ENCODE measurements at regions of chr10 and their contacts with region 1.

Region 1: DNA sequence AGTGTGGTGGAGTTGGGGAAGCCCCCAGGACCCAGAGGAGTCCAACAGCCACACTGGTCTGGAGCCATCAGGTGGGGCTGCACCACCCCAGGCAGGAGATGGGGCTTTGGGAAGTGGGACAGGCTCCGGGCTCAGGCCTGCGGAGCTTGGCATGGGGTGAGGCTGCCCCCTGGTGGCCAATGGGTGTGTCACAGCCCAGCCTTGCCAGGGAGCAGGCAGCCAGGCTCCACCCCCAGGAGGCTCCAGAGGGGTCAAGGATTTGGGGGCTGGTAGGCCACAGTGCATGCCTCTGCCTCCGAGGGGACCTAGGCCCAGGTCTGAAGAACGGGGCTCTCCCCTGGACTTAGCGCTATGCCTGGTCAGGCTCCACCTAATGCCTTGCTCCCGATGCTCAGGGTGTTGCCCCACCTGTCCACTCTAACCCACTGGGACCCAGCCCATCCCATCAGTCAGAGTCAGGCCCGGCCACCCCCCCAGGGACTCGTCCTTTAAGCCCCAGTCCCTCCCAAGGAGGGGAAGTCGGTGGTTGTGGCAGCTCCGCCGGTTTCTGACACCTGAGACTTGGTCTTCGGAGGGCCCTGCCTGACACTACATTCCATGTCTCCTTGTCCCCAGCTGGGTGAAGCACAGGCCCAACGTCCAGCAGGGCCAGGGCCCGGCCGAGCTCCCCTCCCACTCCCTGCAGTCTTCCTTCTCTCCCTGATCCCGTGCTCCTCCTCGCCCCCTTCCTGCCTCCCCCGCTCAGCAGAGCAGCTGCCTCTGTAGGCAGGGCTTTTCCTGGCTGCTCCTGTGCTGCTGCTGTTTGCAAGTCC is 11.3 kb upstream of the SAMD8 start:
- DNase-seq: peak; percentile 88
- CTCF ChIP-seq: peak; percentile 98

Region 2: GRCh38 chr10:74262856-74263255 is 837.3 kb before region 1 on chr10:
- in situ Hi-C with region 1: loop called (anchors 10 kb)
- DNase-seq: no peak
- CTCF ChIP-seq: no peak

Region 3: GRCh38 chr10:75048669-75049098 is 51.5 kb before region 1 on chr10:
- in situ Hi-C with region 1: no loop called
- DNase-seq: no peak
- CTCF ChIP-seq: no peak

Region 4: DNA sequence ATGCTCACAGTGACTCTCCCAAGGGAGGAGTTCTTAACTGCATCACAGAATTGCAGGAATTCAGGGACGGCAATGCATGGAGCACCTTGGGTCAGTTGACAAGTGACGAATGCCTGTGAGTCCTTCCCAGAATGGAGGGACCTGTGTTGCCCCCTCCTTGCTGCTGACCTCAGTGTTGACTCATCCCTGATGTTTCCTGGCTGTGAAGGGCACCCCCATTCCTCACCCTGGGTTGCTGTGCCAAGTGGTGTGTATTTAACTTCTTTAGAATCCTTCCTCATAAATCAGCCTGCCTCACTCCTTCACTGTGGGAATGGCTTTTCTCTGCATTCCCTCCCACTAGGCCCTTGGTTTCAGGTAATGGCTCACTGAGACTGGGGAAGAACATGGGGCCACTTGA is 430.2 kb after region 1 on chr10:
- in situ Hi-C with region 1: no loop called
- DNase-seq: no peak
- CTCF ChIP-seq: no peak

Measured in GM13977 (cell line).